ENCODE measurements at regions of chr7 and their contacts with region 1.

Region 1: DNA sequence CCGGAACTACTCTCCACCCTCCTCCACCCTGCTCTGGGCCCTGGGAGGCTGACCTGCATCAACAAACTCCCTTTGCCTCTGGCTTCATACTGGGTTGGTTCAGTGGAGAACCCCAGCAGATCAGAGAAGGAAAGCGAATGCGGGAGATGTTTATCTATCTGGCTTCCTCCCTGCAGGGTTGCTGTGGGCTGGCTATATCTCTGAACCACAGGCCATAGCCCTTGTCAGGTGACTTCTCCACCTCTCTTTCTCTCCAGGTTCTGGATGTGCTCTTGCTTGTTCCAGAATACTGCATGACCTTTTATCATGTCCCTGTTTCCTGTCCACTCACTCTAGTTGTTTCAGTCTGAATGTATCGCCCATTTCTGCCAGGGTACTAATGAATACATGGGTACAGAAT is 51.7 kb upstream of the IFRD1 start:
- DNase-seq: peak; percentile 38
- H3K4me3 Mint-ChIP-seq: no peak overlapping the region
- H3K27ac Mint-ChIP-seq: no peak overlapping the region
- H3K4me1 Mint-ChIP-seq: peaks cover 22% of the 10 kb centered on the region
- H3K27me3 Mint-ChIP-seq: peaks cover 30% of the 10 kb centered on the region

Region 2: GRCh38 chr7:112414855-112415490 is 16.4 kb after region 1 on chr7:
- intact Hi-C with region 1: loop called (anchors 2 kb)
- DNase-seq: no peak
- H3K4me3 Mint-ChIP-seq: no peak overlapping the region
- H3K27ac Mint-ChIP-seq: no peak overlapping the region
- H3K4me1 Mint-ChIP-seq: peaks cover 1% of the 10 kb centered on the region
- H3K27me3 Mint-ChIP-seq: peaks cover 11% of the 10 kb centered on the region

Region 3: GRCh38 chr7:112449902-112450806 is 51.6 kb after region 1 on chr7 and contains the start of gene IFRD1:
- intact Hi-C with region 1: loop called (anchors 2 kb)
- DNase-seq: peak; percentile 96
- H3K4me3 Mint-ChIP-seq: peak within 1 kb of the TSS; percentile 97
- H3K27ac Mint-ChIP-seq: peak within 1 kb of the TSS; percentile 98
- H3K4me1 Mint-ChIP-seq: peaks cover 50% of the 10 kb centered on the region
- H3K27me3 Mint-ChIP-seq: no peaks in the 10 kb centered on the region
- total RNA-seq, gene IFRD1: 49.5 and 51.7 TPM in 2 replicates

Region 4: GRCh38 chr7:112510001-112510742 is 111.6 kb after region 1 on chr7:
- intact Hi-C with region 1: loop called (anchors 5 kb)
- DNase-seq: no peak
- H3K4me3 Mint-ChIP-seq: no peak overlapping the region
- H3K27ac Mint-ChIP-seq: peak overlapping the region; percentile 44
- H3K4me1 Mint-ChIP-seq: peaks cover 21% of the 10 kb centered on the region
- H3K27me3 Mint-ChIP-seq: no peaks in the 10 kb centered on the region